Left ventricle myocardium inferior (tissue), 1 donor: ENCODE measurements at regions of chr1 and their contacts with region 1.

Region 1: DNA sequence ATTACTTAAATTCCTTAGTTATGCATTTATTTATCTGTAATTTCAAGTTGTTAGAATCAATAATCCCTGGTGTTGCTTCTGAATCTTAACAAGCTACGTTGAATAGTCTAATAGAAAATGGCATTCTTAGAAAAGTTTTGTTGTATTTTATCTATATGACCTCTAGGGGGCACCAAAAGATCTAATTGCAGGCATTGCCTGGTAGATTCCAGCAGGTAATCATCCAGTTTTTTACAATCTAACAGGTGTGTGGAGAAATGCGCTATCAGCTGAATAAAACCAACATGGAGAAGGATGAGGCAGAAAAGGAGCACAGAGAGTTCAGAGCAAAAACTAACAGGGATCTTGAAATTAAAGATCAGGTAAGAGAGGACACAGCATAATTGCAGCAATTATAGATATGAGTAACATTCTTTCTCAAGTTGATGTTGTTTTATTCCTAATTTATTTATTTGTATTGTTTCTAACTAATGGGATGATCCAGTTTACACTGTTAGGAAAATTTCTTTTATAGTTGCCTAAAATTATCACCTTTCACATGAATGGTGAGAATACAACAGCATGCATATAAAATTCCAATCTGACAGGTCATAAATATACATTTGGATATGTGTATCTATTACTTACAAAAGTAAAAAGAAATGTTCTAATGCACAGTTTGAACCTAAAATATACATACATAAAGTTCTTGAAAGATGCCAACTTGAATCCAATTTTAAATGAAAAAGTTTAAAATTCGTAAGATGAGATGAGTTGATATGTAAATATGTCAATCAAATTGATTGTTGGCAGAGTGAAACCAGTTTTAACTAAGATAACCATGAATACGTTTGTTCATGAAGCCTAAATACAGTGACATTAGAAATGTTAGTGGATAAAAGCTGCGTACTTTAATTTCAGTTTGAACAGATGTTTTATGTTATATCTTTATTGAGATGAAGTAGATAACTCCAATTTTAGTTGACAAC is 88.4 kb downstream of the SDCCAG8 start:
- DNase-seq: no peak
- H3K4me3 ChIP-seq: no peak overlapping the region
- H3K27ac ChIP-seq: no peak overlapping the region
- H3K4me1 ChIP-seq: no peaks in the 10 kb centered on the region
- H3K27me3 ChIP-seq: no peaks in the 10 kb centered on the region
- CTCF ChIP-seq: peak; percentile 77

Region 2: DNA sequence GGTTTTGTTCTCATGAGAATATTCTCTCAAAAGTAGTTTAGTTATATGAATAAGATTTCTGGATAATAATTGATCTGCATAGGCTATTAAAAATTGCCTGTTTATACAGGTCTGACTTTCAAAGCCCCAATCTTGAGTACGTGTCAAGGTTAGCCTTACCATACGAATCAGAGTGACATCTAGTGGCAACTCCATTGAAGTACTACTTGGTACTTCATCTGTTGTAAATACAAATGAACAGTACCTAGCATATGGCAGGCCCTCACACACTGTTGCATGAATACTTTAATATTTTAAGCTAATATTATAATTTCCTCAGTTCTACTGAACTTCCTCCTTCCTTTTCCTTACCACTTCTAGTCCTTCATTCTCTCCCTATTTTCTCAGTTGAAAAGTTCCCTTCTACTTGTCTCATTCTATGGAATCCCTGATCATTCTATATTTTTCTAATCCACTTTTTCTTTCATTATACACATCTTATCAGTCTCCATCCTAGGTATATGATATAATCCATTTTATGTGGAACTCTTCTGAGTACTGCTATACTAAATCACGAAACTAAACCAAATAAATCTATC is 404.5 kb after region 1 on chr1:
- intact Hi-C with region 1: loop called (anchors 5 kb)
- DNase-seq: no peak
- H3K4me3 ChIP-seq: no peak overlapping the region
- H3K27ac ChIP-seq: no peak overlapping the region
- H3K4me1 ChIP-seq: peaks cover 7% of the 10 kb centered on the region
- H3K27me3 ChIP-seq: no peaks in the 10 kb centered on the region
- CTCF ChIP-seq: peak; percentile 88

Region 3: GRCh38 chr1:244272471-244273261 is 928.4 kb after region 1 on chr1:
- intact Hi-C with region 1: loop called (anchors 10 kb)
- DNase-seq: peak; percentile 57
- H3K4me3 ChIP-seq: no peak overlapping the region
- H3K27ac ChIP-seq: peak overlapping the region; percentile 43
- H3K4me1 ChIP-seq: peaks cover 6% of the 10 kb centered on the region
- H3K27me3 ChIP-seq: peaks cover 4% of the 10 kb centered on the region
- CTCF ChIP-seq: peak; percentile 93